PC-3 (cell line): ENCODE measurements at regions of chr4 and their contacts with region 1.

Region 1: DNA sequence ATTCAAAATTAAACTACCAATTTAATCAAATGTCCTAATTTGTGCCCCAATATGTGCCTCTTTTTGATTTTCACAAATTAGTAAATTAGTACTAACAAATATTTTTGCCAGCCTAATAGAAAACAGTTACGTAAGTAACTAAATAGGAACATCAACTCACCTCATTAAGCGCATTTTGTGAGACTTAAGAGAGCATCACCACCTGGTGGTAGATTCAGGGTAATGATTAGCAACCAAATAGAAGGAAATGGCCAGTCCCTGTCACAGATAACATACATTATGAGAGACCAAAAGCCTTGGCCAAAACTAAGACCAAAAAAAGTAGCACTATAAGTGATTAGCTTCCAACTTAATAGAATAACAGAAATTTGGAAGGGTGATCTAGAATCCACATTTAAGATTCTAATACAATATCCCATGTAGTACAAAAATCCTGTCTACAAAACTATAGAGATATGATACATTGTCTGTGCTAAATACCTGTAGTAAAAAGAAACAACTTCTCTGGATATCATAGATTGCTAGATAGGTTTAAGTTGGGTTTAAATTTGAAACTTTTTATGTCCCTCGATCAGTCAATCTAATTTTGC is 46.7 kb downstream of the C4orf46 start:
- DNase-seq: peak; percentile 75
- ATAC-seq: peak; percentile 63
- H3K4me3 ChIP-seq: no peak overlapping the region
- H3K27ac ChIP-seq: no peak overlapping the region
- H3K4me1 ChIP-seq: 0 out of 2 replicates have a peak, but pooled peaks cover 3% of the 10 kb centered on the region
- H3K27me3 ChIP-seq: no peaks in the 10 kb centered on the region
- CTCF ChIP-seq: peak; percentile 83

Region 2: DNA sequence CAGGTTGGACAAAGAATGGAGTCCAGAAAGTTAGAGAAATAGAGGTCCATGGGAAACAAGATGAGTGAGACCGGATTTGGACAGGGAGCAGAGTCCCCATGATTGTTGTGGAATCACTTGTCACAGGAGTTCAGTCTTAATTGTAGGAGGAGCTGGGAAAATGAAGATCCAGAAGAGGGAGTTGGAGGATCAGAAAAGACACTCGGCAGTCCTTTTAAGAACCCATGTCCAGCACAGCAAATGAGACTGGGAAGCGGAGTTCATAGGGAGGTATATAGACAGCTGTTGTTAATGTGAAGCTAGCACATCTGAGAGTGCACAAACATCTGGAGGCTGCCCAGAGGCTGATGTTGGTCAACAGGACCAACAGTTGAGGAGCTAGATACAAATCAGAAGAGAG is 214.7 kb before region 1 on chr4:
- CTCF ChIA-PET with region 1: no interaction called
- POLR2A ChIA-PET with region 1: no interaction called
- intact Hi-C with region 1: loop called (anchors 1 kb)
- DNase-seq: peak; percentile 45
- ATAC-seq: peak; percentile 75
- H3K4me3 ChIP-seq: no peak overlapping the region
- H3K27ac ChIP-seq: no peak overlapping the region
- H3K4me1 ChIP-seq: no peaks in the 10 kb centered on the region
- H3K27me3 ChIP-seq: no peaks in the 10 kb centered on the region
- CTCF ChIP-seq: peak; percentile 41; the same call in 1 of the 2 replicates